OCI-LY7 (cell line): ENCODE measurements at regions of chr7 and their contacts with region 1.

Region 1: GRCh38 chr7:141785706-141786552 is 4.1 kb upstream of the TAS2R5 start:
- DNase-seq: peak; percentile 61
- H3K4me3 ChIP-seq: no peak overlapping the region
- H3K27ac ChIP-seq: no peak overlapping the region
- H3K4me1 ChIP-seq: no peaks in the 10 kb centered on the region
- CTCF ChIP-seq: peak; percentile 94

Region 2: GRCh38 chr7:141617280-141617679 is 168.6 kb before region 1 on chr7:
- CTCF ChIA-PET with region 1: no interaction called
- POLR2A ChIA-PET with region 1: no interaction called
- intact Hi-C with region 1: no loop called
- DNase-seq: no peak
- H3K4me3 ChIP-seq: no peak overlapping the region
- H3K27ac ChIP-seq: no peak overlapping the region
- H3K4me1 ChIP-seq: no peaks in the 10 kb centered on the region
- CTCF ChIP-seq: no peak

Region 3: GRCh38 chr7:141654551-141654950 is 131.4 kb before region 1 on chr7:
- CTCF ChIA-PET with region 1: interaction called, 5 read pairs
- POLR2A ChIA-PET with region 1: interaction called, 3 read pairs
- intact Hi-C with region 1: loop called (anchors 2 kb)
- DNase-seq: peak; percentile 61
- H3K4me3 ChIP-seq: no peak overlapping the region
- H3K27ac ChIP-seq: no peak overlapping the region
- H3K4me1 ChIP-seq: peaks cover 1% of the 10 kb centered on the region
- CTCF ChIP-seq: peak; percentile 88